Common myeloid progenitor, CD34-positive (primary cell): ENCODE measurements at regions of chr7 and their contacts with region 1.

Region 1: DNA sequence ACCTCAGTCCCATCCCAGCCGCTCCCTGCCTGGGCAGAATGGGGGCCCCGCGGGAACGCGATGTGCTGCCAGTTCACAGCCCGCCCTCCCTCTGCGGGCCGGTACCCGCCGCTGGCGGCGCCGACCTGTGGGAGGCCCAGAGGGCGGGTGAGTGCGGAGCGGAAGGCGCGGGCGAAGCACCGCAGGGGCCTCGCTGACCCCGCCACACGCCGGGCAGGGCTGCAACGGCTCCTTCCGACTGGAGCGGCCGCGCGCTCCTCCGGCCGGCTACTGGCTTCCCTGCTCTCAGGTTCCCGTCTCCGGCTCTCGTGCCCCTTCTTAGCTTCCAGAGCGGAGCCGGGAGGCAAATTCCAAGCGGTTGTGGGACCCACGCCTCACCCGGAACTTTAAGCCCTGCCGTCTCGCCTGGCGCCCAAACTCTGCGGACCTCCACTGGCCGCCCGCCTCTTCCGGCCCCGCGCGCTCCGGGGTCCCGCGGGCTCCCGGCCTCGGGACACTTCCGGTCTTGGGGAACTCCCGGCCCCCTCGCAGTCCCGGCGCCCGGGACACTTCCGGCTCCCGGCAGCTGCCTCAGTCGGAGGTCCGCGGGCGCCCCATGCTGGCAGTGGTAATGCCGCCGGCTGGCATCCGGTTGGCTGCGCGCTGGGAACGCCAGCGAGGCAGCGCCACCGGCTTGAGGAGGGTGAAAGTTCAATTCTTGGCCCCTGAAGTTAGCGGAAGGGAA is at the start of gene CYREN:
- DNase-seq: peak; percentile 79 to 86 (median 85)
- H3K4me3 ChIP-seq: peak within 1 kb of the TSS; percentile 73 to 93 (median 81)
- H3K27ac ChIP-seq: peak within 1 kb of the TSS; percentile 77 to 90
- H3K4me1 ChIP-seq: peaks cover 17 to 61% (median 47%) of the 10 kb centered on the region in 4 experiments
- H3K27me3 ChIP-seq: no peaks in the 10 kb centered on the region

Region 2: GRCh38 chr7:134986363-134987251 is 183.8 kb before region 1 on chr7 and contains the start of gene AGBL3:
- CTCF ChIA-PET with region 1: interaction called, 55 read pairs
- POLR2A ChIA-PET with region 1: interaction called, 3 read pairs
- DNase-seq: peak; percentile 92 to 94 (median 94)
- H3K4me3 ChIP-seq: peak within 1 kb of the TSS; percentile 85 to 99 (median 95)
- H3K27ac ChIP-seq: peak within 1 kb of the TSS; percentile 87 to 95
- H3K4me1 ChIP-seq: peaks cover 0 to 12% (median 2%) of the 10 kb centered on the region in 4 experiments
- H3K27me3 ChIP-seq: no peaks in the 10 kb centered on the region

Region 3: DNA sequence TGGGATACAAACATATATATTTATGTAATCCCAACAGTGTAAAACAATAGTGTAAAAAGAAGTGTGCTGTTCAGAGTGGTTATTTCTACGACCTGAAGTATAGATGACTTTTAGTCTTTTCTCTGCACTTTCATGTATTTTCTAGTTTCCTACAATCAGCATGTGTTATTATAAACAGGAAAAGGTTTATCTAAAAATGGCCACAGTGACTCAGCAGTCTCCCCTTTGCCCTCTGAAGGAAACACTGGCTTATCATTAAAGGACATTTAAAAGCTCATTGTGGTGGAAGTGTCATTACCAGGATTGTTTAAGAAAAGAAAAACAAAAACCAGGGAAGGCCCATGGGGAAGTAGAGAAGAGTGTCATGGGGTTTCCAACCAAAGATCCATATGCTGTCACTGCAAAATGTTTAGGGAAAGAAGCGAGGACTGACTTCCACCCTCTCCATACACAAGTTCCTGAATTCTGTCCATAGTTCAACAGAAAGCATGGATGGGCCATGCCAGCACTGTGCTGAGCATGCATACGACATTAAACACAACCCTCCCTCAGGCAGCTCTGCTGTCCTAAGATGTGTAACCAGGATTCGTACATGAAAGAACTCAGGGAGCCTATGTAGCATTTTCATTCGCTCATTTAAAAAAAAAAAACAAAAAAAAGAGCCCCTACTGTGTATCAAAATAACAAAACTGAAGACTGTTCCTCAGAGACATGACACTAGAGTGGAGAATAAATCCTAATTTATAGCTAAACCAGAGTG is 10.2 kb before region 1 on chr7:
- CTCF ChIA-PET with region 1: interaction called, 67 read pairs
- POLR2A ChIA-PET with region 1: interaction called, 26 read pairs
- DNase-seq: peak; percentile 85 to 92 (median 91)
- H3K4me3 ChIP-seq: peak overlapping the region in 3 of 7 experiments; percentile 21 to 33 (median 27)
- H3K27ac ChIP-seq: peak overlapping the region; percentile 83 to 95
- H3K4me1 ChIP-seq: peaks cover 27 to 70% (median 47%) of the 10 kb centered on the region in 4 experiments
- H3K27me3 ChIP-seq: no peaks in the 10 kb centered on the region

Region 4: GRCh38 chr7:135211179-135211945 is 40.9 kb after region 1 on chr7 and contains the start of gene WDR91:
- CTCF ChIA-PET with region 1: no interaction called
- POLR2A ChIA-PET with region 1: no interaction called
- DNase-seq: peak; percentile 91 to 96 (median 96)
- H3K4me3 ChIP-seq: peak within 1 kb of the TSS; percentile 74 to 96 (median 89)
- H3K27ac ChIP-seq: peak within 1 kb of the TSS; percentile 64 to 91
- H3K4me1 ChIP-seq: peaks cover 29 to 51% (median 46%) of the 10 kb centered on the region in 4 experiments
- H3K27me3 ChIP-seq: no peaks in the 10 kb centered on the region